Gastrocnemius medialis (tissue), 4 donors: ENCODE measurements at regions of chr5 and their contacts with region 1.

Region 1: DNA sequence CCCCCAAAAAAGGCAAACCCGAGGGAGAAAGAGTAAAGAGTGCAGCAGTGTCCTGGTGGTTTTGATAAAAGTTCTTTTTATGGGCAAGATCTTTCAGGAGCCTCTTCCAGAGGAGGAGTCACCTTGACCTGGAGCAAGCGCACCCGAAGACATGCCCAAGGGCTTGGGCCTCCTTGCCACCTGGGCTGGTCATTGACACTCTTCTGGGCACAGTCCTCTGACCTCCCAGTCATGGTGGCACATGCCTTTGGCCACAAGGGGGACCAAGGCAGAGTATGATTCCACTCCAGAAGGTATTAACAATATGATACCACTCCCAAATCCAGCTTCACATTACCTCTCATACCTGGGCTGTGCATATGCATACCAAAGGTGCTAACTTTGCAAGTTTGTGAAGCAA is 84.5 kb downstream of the MAST4 start:
- DNase-seq: no peak
- ATAC-seq: no peak
- H3K4me3 ChIP-seq: no peak overlapping the region
- H3K27ac ChIP-seq: no peak overlapping the region
- H3K4me1 ChIP-seq: no peaks in the 10 kb centered on the region
- H3K27me3 ChIP-seq: no peaks in the 10 kb centered on the region
- CTCF ChIP-seq: no peak
- POLR2A ChIP-seq: no peak

Region 2: GRCh38 chr5:66653325-66653724 is 27.4 kb before region 1 on chr5:
- in situ Hi-C with region 1: no loop called
- intact Hi-C with region 1: loop called (anchors 1 kb)
- DNase-seq: no peak
- ATAC-seq: no peak
- H3K4me3 ChIP-seq: no peak overlapping the region
- H3K27ac ChIP-seq: no peak overlapping the region
- H3K4me1 ChIP-seq: no peaks in the 10 kb centered on the region
- H3K27me3 ChIP-seq: no peaks in the 10 kb centered on the region
- CTCF ChIP-seq: no peak
- POLR2A ChIP-seq: no peak